Mammary epithelial cell (primary cell): ENCODE measurements at regions of chr20 and their contacts with region 1.

Region 1: GRCh38 chr20:54649511-54649962 is 174.1 kb downstream of the DOK5 start:
- DNase-seq: peak; percentile 69
- H3K4me3 ChIP-seq: no peak overlapping the region
- H3K27ac ChIP-seq: no peak overlapping the region
- H3K4me1 ChIP-seq: no peaks in the 10 kb centered on the region
- H3K27me3 ChIP-seq: no peaks in the 10 kb centered on the region
- CTCF ChIP-seq: peak; percentile 76 to 80

Region 2: GRCh38 chr20:54093423-54094267 is 555.9 kb before region 1 on chr20:
- CTCF ChIA-PET with region 1: no interaction called
- dilution Hi-C with region 1: no loop called
- in situ Hi-C with region 1: loop called in 1 of 2 experiments (anchors 10 kb)
- intact Hi-C with region 1: loop called (anchors 2 kb)
- DNase-seq: no peak
- H3K4me3 ChIP-seq: no peak overlapping the region
- H3K27ac ChIP-seq: no peak overlapping the region
- H3K4me1 ChIP-seq: no peaks in the 10 kb centered on the region
- H3K27me3 ChIP-seq: no peaks in the 10 kb centered on the region
- CTCF ChIP-seq: no peak